ENCODE measurements at regions of chr3 and their contacts with region 1.

Region 1: DNA sequence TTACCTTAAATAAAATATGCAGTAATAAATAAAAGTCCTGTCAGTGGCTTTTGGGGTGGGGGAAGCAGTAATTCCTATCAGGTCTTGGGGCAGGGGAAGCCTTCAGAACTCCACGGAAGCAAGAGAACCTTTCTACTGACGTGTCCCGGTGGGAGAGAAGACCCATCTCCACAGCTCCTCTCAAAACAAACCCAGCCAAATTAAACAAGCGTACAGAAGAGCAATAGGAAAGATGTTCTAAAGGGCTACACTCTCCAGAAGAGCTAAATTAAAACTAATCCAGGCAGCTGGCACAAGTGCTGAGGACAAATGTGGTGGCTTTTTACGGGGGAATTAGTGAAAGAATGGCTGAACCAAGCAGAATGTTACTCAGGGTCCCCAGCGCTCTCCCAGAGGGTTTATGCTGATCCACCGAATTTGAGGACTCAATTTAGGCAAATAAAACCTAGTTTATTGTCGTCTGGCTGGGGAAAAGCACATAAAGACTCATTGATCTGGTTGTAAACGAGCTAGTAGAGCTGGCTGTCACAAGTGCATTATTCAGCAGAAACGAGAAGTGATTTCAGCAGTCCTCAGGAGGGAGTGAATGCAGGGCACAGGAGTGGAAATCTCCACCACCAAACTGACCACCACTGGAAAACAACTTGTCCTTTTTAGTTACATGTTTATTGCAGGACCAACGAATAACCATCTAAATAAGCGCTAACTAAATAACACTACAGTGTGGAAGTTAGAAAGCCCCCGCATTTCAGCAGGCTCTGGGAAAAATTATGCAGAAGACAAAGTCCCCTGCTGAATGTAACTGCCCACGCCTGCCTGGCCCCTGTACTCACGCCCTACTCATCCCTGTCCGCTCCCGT is 13.5 kb downstream of the BFSP2 start:
- DNase-seq: no peak
- ATAC-seq: peak; percentile 50 to 86 (median 82)
- H3K4me3 ChIP-seq: no peak overlapping the region
- H3K27ac ChIP-seq: no peak overlapping the region
- H3K4me1 ChIP-seq: peaks cover 0 to 3% (median 0%) of the 10 kb centered on the region in 3 donors
- H3K27me3 ChIP-seq: no peaks in the 10 kb centered on the region
- CTCF ChIP-seq: no peak

Region 2: GRCh38 chr3:133040696-133041523 is 372.5 kb before region 1 on chr3:
- intact Hi-C with region 1: loop called in 1 of 3 experiments (anchors 10 kb)
- DNase-seq: peak; percentile 58 to 79 (median 69)
- ATAC-seq: peak; percentile 70 to 86 (median 82)
- H3K4me3 ChIP-seq: no peak overlapping the region
- H3K27ac ChIP-seq: no peak overlapping the region
- H3K4me1 ChIP-seq: no peaks in the 10 kb centered on the region
- H3K27me3 ChIP-seq: no peaks in the 10 kb centered on the region
- CTCF ChIP-seq: peak; percentile 44 to 69 (median 56)

Region 3: DNA sequence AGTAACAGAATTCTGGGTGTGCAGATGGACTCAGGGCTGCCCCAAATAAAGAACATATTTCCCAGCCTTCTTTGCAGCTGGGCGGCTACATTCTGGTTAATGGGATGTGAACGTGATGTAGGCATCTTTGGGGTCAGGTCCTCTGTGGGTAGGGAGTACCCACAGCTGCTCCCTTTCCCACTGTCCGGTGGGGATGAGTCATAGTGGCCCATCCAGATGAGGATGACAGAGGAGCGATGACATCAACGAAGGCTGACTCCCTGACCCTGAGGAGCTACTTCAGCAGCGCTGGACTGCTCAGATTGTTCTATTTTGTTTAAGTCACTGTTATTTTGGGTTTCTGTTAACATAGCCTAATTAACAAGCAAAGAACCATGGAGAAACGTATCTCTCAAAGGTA is 430.2 kb after region 1 on chr3:
- intact Hi-C with region 1: no loop called
- DNase-seq: no peak
- ATAC-seq: no peak
- H3K4me3 ChIP-seq: no peak overlapping the region
- H3K27ac ChIP-seq: no peak overlapping the region
- H3K4me1 ChIP-seq: no peaks in the 10 kb centered on the region
- H3K27me3 ChIP-seq: no peaks in the 10 kb centered on the region
- CTCF ChIP-seq: no peak

Measured in pancreas (tissue), 10 donors.